Activated CD4-positive, alpha-beta T cell treated with anti-CD3 and anti-CD28 coated beads, Interleukin-2, amount 10 ng/mL, durations not matched to agents 24 days and 14 days (primary cell): ENCODE measurements at regions of chr2 and their contacts with region 1.

Region 1: DNA sequence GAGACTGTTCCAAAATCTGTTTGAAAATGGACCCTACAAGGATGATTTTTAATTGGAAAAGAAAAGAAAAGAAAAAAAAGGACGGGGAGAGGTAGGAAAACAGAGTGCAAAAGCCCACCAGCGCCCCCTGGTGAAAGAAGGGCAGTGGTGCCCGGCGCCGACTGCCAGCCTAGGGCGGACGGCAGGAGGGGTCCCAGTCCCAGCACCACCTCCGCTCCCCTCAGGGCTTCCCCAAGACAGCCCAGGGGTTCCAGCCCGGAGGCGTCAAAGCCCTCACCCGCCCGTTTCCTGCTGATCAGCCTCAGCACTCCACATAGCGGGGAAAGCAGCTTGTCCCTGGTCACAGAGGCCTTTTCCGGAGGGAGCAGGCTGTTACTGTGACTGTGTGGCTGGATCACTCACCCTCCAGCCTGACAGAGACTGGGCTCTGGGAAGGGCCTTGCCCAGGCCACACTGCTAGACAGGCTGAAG is 213.9 kb downstream of the TFCP2L1 start:
- DNase-seq: peak; percentile 84
- H3K4me3 Mint-ChIP-seq: no peak overlapping the region
- H3K27ac Mint-ChIP-seq: no peak overlapping the region
- H3K4me1 Mint-ChIP-seq: no peaks in the 10 kb centered on the region
- H3K27me3 Mint-ChIP-seq: peaks cover 16% of the 10 kb centered on the region

Region 2: GRCh38 chr2:120693121-120693520 is 377.9 kb before region 1 on chr2:
- intact Hi-C with region 1: loop called (anchors 1 kb)
- DNase-seq: no peak
- H3K4me3 Mint-ChIP-seq: no peak overlapping the region
- H3K27ac Mint-ChIP-seq: no peak overlapping the region
- H3K4me1 Mint-ChIP-seq: no peaks in the 10 kb centered on the region
- H3K27me3 Mint-ChIP-seq: peaks cover 36% of the 10 kb centered on the region

Region 3: DNA sequence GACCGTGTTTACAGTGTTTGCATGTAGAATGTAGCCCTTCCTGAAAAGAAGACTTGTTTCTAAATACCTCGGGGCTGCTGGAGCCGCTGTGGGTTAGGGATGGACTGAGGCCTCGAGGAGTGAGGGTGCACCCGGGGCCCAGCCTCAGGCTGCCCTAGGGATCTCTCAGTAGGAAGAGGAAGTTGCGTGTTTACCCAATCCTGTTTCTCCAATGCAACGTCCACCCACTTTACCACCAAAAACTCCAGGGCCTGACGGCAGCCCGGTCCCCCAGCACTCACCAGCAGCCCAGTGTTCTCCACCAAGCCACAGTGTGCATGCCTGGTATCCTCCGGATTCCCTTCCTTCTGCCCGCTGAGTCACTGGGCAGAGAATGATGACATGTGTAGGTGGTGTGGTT is 79.6 kb before region 1 on chr2:
- intact Hi-C with region 1: no loop called
- DNase-seq: no peak
- H3K4me3 Mint-ChIP-seq: no peak overlapping the region
- H3K27ac Mint-ChIP-seq: no peak overlapping the region
- H3K4me1 Mint-ChIP-seq: no peaks in the 10 kb centered on the region
- H3K27me3 Mint-ChIP-seq: no peaks in the 10 kb centered on the region